ENCODE measurements at regions of chr4 and their contacts with region 1.

Region 1: GRCh38 chr4:94621491-94622080 is 136.2 kb upstream of the BMPR1B start:
- DNase-seq: peak; percentile 34
- H3K4me3 ChIP-seq: no peak overlapping the region
- H3K27ac ChIP-seq: peak overlapping the region; percentile 74 to 84
- H3K4me1 ChIP-seq: peaks cover 16% of the 10 kb centered on the region
- H3K27me3 ChIP-seq: no peaks in the 10 kb centered on the region
- CTCF ChIP-seq: peak; percentile 84 to 92 (median 87)
- POLR2A ChIP-seq: no peak

Region 2: GRCh38 chr4:94732358-94732698 is 110.7 kb after region 1 on chr4:
- intact Hi-C with region 1: loop called (anchors 5 kb)
- DNase-seq: no peak
- H3K4me3 ChIP-seq: no peak overlapping the region
- H3K27ac ChIP-seq: no peak overlapping the region
- H3K4me1 ChIP-seq: no peaks in the 10 kb centered on the region
- H3K27me3 ChIP-seq: no peaks in the 10 kb centered on the region
- CTCF ChIP-seq: no peak
- POLR2A ChIP-seq: no peak

Region 3: GRCh38 chr4:95124906-95125504 is 503.4 kb after region 1 on chr4:
- intact Hi-C with region 1: loop called (anchors 10 kb)
- DNase-seq: peak; percentile 33
- H3K4me3 ChIP-seq: no peak overlapping the region
- H3K27ac ChIP-seq: no peak overlapping the region
- H3K4me1 ChIP-seq: no peaks in the 10 kb centered on the region
- H3K27me3 ChIP-seq: no peaks in the 10 kb centered on the region
- CTCF ChIP-seq: peak in 3 of 4 experiments; percentile 28 to 70 (median 59)
- POLR2A ChIP-seq: no peak